ENCODE measurements at regions of chrX and their contacts with region 1.

Region 1: GRCh38 chrX:65697915-65698796 is 30.7 kb downstream of the MSN start:
- DNase-seq: peak; percentile 85
- H3K4me3 Mint-ChIP-seq: peak overlapping the region; percentile 46
- H3K27ac Mint-ChIP-seq: peak overlapping the region; percentile 91
- H3K4me1 Mint-ChIP-seq: peaks cover 90% of the 10 kb centered on the region
- H3K27me3 Mint-ChIP-seq: no peaks in the 10 kb centered on the region

Region 2: DNA sequence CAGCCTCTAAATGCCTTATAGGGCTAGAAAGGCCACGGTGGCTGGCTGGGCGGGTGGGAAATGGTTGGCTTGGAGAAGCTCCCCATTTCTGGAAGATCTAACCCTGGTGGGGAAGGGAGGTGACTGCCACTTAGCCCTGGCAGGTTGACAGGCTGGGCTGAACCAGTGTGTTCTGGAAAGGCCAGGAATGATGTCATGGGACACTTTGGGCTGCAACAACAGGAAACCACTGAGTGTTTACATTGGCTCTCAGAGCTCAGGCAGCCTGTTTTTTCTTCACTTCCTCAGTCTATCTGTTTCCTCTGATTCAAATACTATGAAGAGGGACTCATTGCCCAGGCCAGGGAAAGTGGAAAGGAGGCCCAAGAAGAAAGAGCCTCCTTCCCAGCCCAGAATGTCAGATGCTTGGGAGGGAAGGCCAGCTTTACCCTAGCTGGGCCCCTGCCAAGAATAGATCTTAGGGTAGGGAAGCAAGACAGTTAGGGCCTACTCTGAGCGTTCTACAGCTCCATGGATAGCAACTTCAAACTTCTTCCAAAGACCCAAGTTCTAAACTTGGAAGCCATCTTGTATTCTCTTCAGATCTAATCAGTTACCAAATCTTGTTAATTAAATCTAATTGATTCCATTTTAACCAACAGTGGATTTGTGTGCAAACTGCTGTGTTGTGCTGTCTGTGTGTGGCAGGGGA is 96.5 kb before region 1 on chrX:
- CTCF ChIA-PET with region 1: interaction called, 3 read pairs
- POLR2A ChIA-PET with region 1: interaction called, 3 read pairs
- intact Hi-C with region 1: loop called (anchors 1 kb)
- DNase-seq: peak; percentile 70
- H3K4me3 Mint-ChIP-seq: no peak overlapping the region
- H3K27ac Mint-ChIP-seq: peak overlapping the region; percentile 91
- H3K4me1 Mint-ChIP-seq: peaks cover 76% of the 10 kb centered on the region
- H3K27me3 Mint-ChIP-seq: no peaks in the 10 kb centered on the region

Region 3: DNA sequence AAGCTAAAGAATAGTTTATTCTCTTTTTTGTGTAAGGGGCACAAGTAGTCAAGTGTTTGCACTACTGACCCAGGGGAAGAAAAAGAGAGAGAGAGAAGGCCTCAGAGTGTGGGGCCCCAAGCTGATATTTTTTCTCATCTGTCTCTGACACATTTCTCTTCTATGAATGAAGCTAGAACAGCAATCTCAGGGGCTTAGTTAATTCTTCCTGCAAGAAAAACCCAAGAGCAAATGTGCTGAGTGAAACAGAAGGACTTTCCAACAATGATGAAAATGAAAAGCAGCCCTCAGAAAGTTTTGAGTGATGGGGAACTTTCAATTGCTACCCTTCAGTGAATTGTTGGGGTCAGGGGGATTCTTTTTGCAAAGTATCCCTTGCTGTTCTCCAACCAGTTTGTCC is 39.9 kb before region 1 on chrX:
- CTCF ChIA-PET with region 1: no interaction called
- POLR2A ChIA-PET with region 1: interaction called, 4 read pairs
- intact Hi-C with region 1: loop called (anchors 1 kb)
- DNase-seq: no peak
- H3K4me3 Mint-ChIP-seq: no peak overlapping the region
- H3K27ac Mint-ChIP-seq: peak overlapping the region; percentile 69
- H3K4me1 Mint-ChIP-seq: peaks cover 34% of the 10 kb centered on the region
- H3K27me3 Mint-ChIP-seq: no peaks in the 10 kb centered on the region

Region 4: DNA sequence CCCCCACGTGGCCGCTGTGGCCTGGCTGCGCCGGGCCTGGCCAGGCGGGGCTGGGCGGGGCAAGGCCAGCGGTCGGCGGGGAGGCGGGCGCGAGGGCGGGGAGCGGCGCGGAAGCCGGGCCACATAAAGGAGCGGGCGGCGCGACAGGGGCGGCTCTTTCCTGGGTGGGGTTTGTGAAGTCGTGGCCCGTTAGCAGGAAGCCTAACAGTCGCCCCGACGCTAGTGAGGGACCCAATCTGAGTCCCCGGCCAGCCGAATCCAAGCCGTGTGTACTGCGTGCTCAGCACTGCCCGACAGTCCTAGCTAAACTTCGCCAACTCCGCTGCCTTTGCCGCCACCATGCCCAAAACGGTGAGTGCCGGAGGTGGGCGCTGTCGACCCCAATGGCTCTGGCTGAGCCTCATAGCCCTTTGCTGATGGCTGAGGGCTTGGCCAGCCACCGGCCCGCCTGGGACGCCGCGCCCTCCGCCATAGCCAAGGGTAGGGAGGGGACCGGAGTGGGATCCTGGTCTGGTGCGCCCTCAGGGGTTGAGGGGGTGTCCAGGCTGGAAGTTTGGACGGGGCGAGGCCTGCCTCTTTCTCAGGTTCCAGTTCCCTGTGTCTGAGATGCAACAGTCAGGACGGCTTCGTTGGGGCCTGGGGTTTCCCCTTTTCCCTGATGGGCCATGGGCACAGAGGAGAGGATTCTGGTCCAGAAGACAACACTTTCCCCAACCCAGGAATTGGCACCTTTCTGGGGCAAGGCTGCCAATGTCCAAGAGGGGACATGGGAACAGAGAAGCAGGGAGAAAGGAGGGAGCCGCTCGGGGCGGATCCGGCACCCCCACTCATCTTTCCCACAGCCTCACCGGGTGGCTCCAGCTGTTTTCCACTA is 30.4 kb before region 1 on chrX and contains the start of gene MSN:
- CTCF ChIA-PET with region 1: interaction called, 14 read pairs
- POLR2A ChIA-PET with region 1: interaction called, 25 read pairs
- intact Hi-C with region 1: loop called (anchors 1 kb)
- DNase-seq: peak; percentile 86
- H3K4me3 Mint-ChIP-seq: peak within 1 kb of the TSS; percentile 93
- H3K27ac Mint-ChIP-seq: peak within 1 kb of the TSS; percentile 97
- H3K4me1 Mint-ChIP-seq: peaks cover 29% of the 10 kb centered on the region
- H3K27me3 Mint-ChIP-seq: no peaks in the 10 kb centered on the region
- total RNA-seq, gene MSN: 494 to 502 TPM

Region 5: GRCh38 chrX:65674204-65674893 is 23.8 kb before region 1 on chrX:
- CTCF ChIA-PET with region 1: interaction called, 14 read pairs
- POLR2A ChIA-PET with region 1: interaction called, 25 read pairs
- intact Hi-C with region 1: loop called (anchors 1 kb)
- DNase-seq: no peak
- H3K4me3 Mint-ChIP-seq: peak overlapping the region; percentile 80
- H3K27ac Mint-ChIP-seq: peak overlapping the region; percentile 97
- H3K4me1 Mint-ChIP-seq: peaks cover 63% of the 10 kb centered on the region
- H3K27me3 Mint-ChIP-seq: no peaks in the 10 kb centered on the region

Region 6: DNA sequence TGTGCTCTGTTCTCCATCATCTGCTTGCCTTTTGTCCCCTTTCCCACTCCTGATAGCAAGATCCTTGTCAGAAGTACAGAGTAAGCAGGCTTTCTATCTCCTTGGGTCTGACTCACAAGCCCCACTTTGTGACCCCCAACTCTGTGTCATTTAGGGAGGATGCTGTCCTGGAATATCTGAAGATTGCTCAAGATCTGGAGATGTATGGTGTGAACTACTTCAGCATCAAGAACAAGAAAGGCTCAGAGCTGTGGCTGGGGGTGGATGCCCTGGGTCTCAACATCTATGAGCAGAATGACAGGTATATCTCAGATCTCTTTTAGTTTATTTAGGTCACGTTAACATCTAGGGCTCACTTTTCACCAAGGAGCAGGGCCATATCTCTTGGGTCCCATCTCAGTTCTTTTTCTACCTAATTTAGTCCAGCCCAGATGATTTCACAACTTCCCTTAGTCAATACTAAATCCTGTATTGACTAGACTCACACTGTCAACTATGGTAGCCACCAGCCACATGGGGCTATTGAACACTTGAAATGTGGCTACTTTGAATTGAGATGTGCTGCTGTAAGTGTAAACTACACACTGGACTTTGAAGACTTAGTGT is 33.6 kb after region 1 on chrX:
- CTCF ChIA-PET with region 1: no interaction called
- POLR2A ChIA-PET with region 1: no interaction called
- intact Hi-C with region 1: loop called (anchors 5 kb)
- DNase-seq: peak; percentile 46
- H3K4me3 Mint-ChIP-seq: no peak overlapping the region
- H3K27ac Mint-ChIP-seq: peak overlapping the region; percentile 88
- H3K4me1 Mint-ChIP-seq: peaks cover 67% of the 10 kb centered on the region
- H3K27me3 Mint-ChIP-seq: no peaks in the 10 kb centered on the region

Measured in activated CD4-positive, alpha-beta memory T cell treated with anti-CD3 and anti-CD28 coated beads for 36 hours (primary cell).